Gastrocnemius medialis (tissue), 4 donors: ENCODE measurements at regions of chr6 and their contacts with region 1.

Region 1: GRCh38 chr6:41591859-41592502 is 45.8 kb downstream of the FOXP4 start:
- DNase-seq: peak; percentile 32 to 59
- ATAC-seq: peak; percentile 80 to 88
- H3K4me3 ChIP-seq: no peak overlapping the region
- H3K27ac ChIP-seq: no peak overlapping the region
- H3K4me1 ChIP-seq: no peaks in the 10 kb centered on the region
- H3K27me3 ChIP-seq: no peaks in the 10 kb centered on the region
- CTCF ChIP-seq: peak; percentile 90 to 95 (median 92)
- POLR2A ChIP-seq: no peak

Region 2: DNA sequence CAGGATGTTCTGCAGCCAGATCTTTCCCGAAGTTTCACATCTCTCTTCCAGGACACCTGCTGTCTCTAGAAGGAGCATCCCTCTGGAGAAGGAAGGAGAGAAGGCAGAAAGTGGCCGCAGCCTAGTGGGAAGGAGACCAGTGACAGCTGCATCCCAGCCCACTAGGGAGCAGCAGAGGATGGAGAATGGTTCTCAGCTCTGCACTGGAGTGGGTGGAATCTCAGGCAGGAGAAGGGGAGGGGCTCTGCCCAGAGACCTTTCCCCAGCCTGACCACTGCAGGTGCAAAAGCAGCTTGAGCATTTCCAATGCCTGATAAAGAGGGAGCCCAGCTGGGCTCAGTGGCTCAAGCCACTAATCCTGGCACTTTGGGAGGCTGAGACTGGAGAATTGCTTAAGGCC is 224.3 kb before region 1 on chr6:
- in situ Hi-C with region 1: loop called in 2 of 4 experiments (anchors 10 kb)
- intact Hi-C with region 1: loop called (anchors 1 kb)
- DNase-seq: no peak
- ATAC-seq: no peak
- H3K4me3 ChIP-seq: no peak overlapping the region
- H3K27ac ChIP-seq: no peak overlapping the region
- H3K4me1 ChIP-seq: peaks cover 10 to 15% of the 10 kb centered on the region in 2 donors
- H3K27me3 ChIP-seq: peaks cover 50 to 54% (median 52%) of the 10 kb centered on the region in 3 donors
- CTCF ChIP-seq: no peak
- POLR2A ChIP-seq: no peak

Region 3: DNA sequence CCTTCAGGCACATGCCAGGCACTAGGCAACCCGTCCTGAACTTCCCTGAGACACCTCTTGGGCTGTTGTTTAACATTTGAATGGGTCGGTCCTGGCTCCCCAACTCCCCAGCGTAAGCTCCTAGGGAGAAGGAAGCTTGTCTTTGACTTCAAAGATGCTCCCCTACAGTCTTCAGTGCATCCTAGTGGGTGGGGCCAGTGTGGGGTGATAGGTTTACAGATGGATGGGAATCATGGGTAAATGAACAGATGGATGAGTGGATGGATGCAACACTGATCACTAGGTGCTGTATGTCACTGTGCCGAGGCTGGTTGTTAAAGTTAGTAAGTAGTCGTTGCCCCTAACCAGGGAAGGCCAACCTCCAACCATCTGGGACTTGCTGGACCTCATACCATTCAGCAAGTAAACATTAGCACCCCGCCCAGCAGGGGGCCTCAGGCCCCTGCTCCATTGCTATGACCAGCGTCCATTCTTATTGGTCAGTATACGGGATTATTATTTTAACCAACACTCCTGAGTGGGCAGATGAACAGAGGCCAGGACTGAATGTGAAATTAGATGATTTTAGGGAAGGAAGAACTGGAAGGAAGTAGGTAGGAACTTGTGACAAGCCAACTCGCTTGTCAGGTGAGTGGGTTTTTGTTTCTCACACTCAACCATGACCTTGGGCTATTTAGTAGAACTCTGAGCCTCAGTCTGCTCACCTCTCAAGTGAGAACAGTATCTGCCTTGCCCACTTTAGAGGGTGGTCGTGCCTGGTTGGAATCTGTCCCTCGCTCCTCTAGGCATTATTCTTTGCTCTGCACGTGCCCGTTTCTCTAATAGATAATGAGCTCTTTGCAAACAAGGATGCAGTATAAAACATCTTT is 128.7 kb before region 1 on chr6:
- in situ Hi-C with region 1: loop called in 3 of 4 experiments (anchors 5 to 10 kb)
- intact Hi-C with region 1: loop called (anchors 1 kb)
- DNase-seq: peak in 1 of 2 donors; percentile 46
- ATAC-seq: peak; percentile 72 to 83
- H3K4me3 ChIP-seq: no peak overlapping the region
- H3K27ac ChIP-seq: no peak overlapping the region
- H3K4me1 ChIP-seq: no peaks in the 10 kb centered on the region
- H3K27me3 ChIP-seq: peaks cover 0 to 8% (median 5%) of the 10 kb centered on the region in 3 donors
- CTCF ChIP-seq: peak in 4 of 5 experiments; percentile 59 to 70 (median 64)
- POLR2A ChIP-seq: no peak

Region 4: DNA sequence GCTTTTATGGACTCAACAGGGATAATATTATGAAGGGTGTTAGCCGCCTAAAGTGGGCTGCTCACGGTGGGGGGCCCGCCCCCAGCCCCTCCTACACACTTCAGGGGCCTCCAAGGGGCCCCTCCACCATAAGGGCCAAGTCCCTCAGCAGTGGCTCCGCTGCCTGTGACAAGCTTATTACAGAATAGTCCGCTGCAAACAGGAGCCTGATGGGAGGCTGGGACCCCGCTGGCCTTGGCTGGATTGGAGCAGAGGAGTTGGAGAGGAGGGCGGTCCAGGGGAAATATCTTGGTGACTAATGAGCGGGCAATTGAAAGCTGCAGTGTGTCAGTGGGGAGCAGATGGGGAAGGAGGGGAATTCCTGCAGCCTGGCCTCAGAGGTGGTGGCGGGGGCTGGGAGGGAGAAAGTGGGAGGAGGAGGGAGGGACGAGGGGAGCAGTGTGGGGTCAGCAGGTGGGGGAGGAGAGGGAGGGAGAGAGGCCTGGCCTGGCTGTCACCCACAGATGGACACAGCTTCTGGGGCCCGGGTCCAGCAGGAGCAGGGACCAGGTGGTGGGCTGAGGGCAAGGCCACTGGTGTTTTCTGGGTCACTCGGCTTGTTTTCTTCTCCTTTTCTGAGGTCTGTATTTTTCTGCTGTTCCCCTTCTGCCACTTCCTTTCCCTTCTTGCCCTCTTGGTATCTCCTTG is 103.4 kb before region 1 on chr6:
- in situ Hi-C with region 1: no loop called
- intact Hi-C with region 1: no loop called
- DNase-seq: no peak
- ATAC-seq: no peak
- H3K4me3 ChIP-seq: no peak overlapping the region
- H3K27ac ChIP-seq: no peak overlapping the region
- H3K4me1 ChIP-seq: no peaks in the 10 kb centered on the region
- H3K27me3 ChIP-seq: peaks cover 0 to 7% (median 0%) of the 10 kb centered on the region in 3 donors
- CTCF ChIP-seq: no peak
- POLR2A ChIP-seq: no peak